ENCODE measurements at regions of chr9 and their contacts with region 1.

Region 1: DNA sequence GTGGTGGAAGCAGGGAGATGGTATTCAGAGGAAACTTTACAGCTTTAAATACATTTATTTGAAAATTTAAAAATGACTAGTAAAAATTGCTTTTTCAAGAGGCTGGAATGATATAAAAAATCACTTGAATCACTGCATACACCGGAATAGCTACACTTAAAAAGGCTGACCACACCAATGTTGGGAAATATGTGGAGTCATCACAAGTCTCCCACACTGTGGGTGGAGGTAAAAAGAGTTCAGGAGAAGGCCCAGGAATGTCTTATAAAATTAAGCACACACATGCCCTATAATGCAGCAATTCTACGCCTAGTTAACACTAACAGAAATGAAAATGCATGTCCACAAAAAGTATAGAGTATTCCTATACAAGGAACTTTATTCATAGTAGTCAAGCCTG is 198.1 kb downstream of the ROR2 start:
- DNase-seq: no peak
- ATAC-seq: no peak
- H3K4me3 ChIP-seq: no peak overlapping the region
- H3K27ac ChIP-seq: no peak overlapping the region
- H3K4me1 ChIP-seq: no peaks in the 10 kb centered on the region
- H3K27me3 ChIP-seq: no peaks in the 10 kb centered on the region
- CTCF ChIP-seq: no peak

Region 2: GRCh38 chr9:91734371-91734981 is 17.4 kb before region 1 on chr9:
- CTCF ChIA-PET with region 1: no interaction called
- POLR2A ChIA-PET with region 1: no interaction called
- in situ Hi-C with region 1: no loop called
- intact Hi-C with region 1: no loop called
- DNase-seq: peak; percentile 42
- ATAC-seq: peak; percentile 77
- H3K4me3 ChIP-seq: no peak overlapping the region
- H3K27ac ChIP-seq: no peak overlapping the region
- H3K4me1 ChIP-seq: no peaks in the 10 kb centered on the region
- H3K27me3 ChIP-seq: no peaks in the 10 kb centered on the region
- CTCF ChIP-seq: peak; percentile 91

Region 3: GRCh38 chr9:91884696-91885687 is 133.1 kb after region 1 on chr9:
- CTCF ChIA-PET with region 1: no interaction called
- POLR2A ChIA-PET with region 1: interaction called, 14 read pairs
- in situ Hi-C with region 1: no loop called
- intact Hi-C with region 1: no loop called
- DNase-seq: no peak
- ATAC-seq: no peak
- H3K4me3 ChIP-seq: no peak overlapping the region
- H3K27ac ChIP-seq: no peak overlapping the region
- H3K4me1 ChIP-seq: no peaks in the 10 kb centered on the region
- H3K27me3 ChIP-seq: no peaks in the 10 kb centered on the region
- CTCF ChIP-seq: no peak